ENCODE measurements at regions of chr1 and their contacts with region 1.

Region 1: DNA sequence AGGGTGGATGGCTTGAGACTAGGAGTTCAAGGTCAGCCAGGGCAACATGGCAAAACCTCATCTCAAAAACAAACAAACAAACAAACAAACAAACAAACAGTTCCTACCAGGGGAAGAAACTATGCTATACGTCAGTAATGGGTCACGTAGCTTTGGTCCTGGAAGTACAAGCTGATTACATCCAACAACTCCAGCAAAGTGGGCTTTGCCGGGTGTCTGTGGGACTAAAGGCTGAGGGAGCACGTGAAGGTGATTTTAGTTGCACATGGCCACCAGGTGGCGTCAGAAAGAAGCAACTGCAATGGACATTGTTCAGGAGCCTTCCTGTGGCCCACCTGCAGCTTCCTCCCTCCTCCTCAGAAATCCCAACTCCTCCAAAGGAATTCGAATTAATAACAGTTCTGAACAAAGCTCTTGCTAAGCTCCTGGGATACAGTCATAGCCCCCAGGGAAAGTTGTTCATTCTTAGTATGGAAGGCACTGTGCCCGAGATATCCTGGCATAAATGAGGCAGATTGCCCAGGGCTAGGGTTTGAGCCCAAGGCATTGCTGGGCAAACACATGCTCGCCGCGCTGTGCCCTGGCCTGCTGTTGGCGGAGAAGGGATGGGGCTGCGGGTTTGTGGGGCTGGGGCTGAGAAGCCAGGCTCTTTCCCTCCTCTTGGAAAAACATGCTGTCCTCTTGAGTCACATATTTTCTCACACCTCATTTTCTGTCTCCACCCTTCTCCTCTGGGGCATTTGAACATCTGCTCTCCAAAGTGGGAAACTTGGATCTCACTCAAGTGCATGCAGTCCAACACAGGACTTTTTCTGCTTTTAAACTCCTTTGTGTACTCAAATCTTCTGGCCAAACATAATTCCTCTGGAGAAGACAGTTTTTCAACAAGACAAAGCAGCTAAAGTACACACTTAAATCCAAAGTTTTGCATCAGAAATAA is 28.6 kb downstream of the AKNAD1 start:
- DNase-seq: peak; percentile 35 to 79 (median 69)
- ATAC-seq: peak; percentile 77
- H3K4me3 ChIP-seq: no peak overlapping the region
- H3K4me3 Mint-ChIP-seq: no peak overlapping the region
- H3K27ac ChIP-seq: no peak overlapping the region
- H3K27ac Mint-ChIP-seq: no peak overlapping the region
- H3K4me1 ChIP-seq: no peaks in the 10 kb centered on the region
- H3K4me1 Mint-ChIP-seq: no peaks in the 10 kb centered on the region
- H3K27me3 ChIP-seq: no peaks in the 10 kb centered on the region
- H3K27me3 Mint-ChIP-seq: no peaks in the 10 kb centered on the region
- CTCF ChIP-seq: peak; percentile 72

Region 2: GRCh38 chr1:108512239-108512981 is 315.9 kb before region 1 on chr1:
- CTCF ChIA-PET with region 1: no interaction called
- POLR2A ChIA-PET with region 1: no interaction called
- intact Hi-C with region 1: loop called in 1 of 2 experiments (anchors 2 kb)
- DNase-seq: peak in 2 of 9 experiments; percentile 65 to 75
- ATAC-seq: peak; percentile 69
- H3K4me3 ChIP-seq: no peak overlapping the region
- H3K4me3 Mint-ChIP-seq: no peak overlapping the region
- H3K27ac ChIP-seq: no peak overlapping the region
- H3K27ac Mint-ChIP-seq: no peak overlapping the region
- H3K4me1 ChIP-seq: no peaks in the 10 kb centered on the region
- H3K4me1 Mint-ChIP-seq: no peaks in the 10 kb centered on the region
- H3K27me3 ChIP-seq: no peaks in the 10 kb centered on the region
- H3K27me3 Mint-ChIP-seq: peaks cover 21% of the 10 kb centered on the region
- CTCF ChIP-seq: peak; percentile 99

Region 3: DNA sequence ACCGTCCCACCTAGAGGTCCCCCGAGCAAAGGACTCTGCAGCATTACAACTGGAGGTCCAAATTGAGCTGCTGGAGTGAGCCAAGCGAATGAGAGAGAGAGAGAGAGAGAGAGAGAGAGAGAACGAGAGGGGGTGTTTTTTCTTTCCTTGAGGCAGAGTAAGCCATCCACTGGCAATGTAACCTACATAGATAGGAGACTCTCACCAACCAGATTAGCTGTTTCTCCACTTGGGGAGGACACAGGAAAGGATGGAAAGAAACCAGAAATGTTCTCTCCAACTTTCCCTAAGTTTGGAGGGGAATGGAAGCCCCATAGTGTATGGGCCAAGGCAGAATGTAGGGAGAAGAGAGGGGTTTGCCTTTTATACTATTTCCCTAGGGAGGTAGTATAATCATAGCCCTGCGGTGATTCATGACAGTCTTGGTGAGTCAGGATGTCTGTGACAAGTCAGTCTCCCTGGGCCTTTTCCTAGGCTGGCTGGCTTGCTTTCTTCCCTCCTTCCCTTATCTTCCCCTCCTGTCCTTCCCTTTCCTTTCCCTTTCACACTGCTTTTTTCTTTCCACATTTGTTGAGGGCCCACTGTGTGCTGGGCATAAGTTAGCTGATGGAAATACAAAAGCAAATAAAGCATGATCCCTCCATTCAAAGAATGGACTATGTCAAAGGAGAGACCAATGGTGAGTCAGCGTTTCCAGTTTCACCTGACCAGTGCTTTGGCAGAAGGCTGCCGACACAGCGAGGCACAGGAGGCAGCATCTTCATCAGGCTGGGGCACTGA is 108.4 kb before region 1 on chr1:
- CTCF ChIA-PET with region 1: no interaction called
- POLR2A ChIA-PET with region 1: no interaction called
- intact Hi-C with region 1: no loop called
- DNase-seq: no peak
- ATAC-seq: no peak
- H3K4me3 ChIP-seq: no peak overlapping the region
- H3K4me3 Mint-ChIP-seq: no peak overlapping the region
- H3K27ac ChIP-seq: no peak overlapping the region
- H3K27ac Mint-ChIP-seq: no peak overlapping the region
- H3K4me1 ChIP-seq: no peaks in the 10 kb centered on the region
- H3K4me1 Mint-ChIP-seq: no peaks in the 10 kb centered on the region
- H3K27me3 ChIP-seq: no peaks in the 10 kb centered on the region
- H3K27me3 Mint-ChIP-seq: peaks cover 7% of the 10 kb centered on the region
- CTCF ChIP-seq: no peak

Region 4: GRCh38 chr1:108846001-108846400 is 17.7 kb after region 1 on chr1:
- CTCF ChIA-PET with region 1: interaction called, 33 read pairs
- POLR2A ChIA-PET with region 1: no interaction called
- intact Hi-C with region 1: no loop called
- DNase-seq: no peak
- ATAC-seq: no peak
- H3K4me3 ChIP-seq: no peak overlapping the region
- H3K4me3 Mint-ChIP-seq: no peak overlapping the region
- H3K27ac ChIP-seq: no peak overlapping the region
- H3K27ac Mint-ChIP-seq: no peak overlapping the region
- H3K4me1 ChIP-seq: no peaks in the 10 kb centered on the region
- H3K4me1 Mint-ChIP-seq: no peaks in the 10 kb centered on the region
- H3K27me3 ChIP-seq: no peaks in the 10 kb centered on the region
- H3K27me3 Mint-ChIP-seq: peaks cover 2% of the 10 kb centered on the region
- CTCF ChIP-seq: no peak

Region 5: GRCh38 chr1:108892356-108893140 is 64.3 kb after region 1 on chr1:
- CTCF ChIA-PET with region 1: interaction called, 227 read pairs
- POLR2A ChIA-PET with region 1: no interaction called
- intact Hi-C with region 1: no loop called
- DNase-seq: no peak
- ATAC-seq: no peak
- H3K4me3 ChIP-seq: no peak overlapping the region
- H3K4me3 Mint-ChIP-seq: no peak overlapping the region
- H3K27ac ChIP-seq: no peak overlapping the region
- H3K27ac Mint-ChIP-seq: no peak overlapping the region
- H3K4me1 ChIP-seq: no peaks in the 10 kb centered on the region
- H3K4me1 Mint-ChIP-seq: no peaks in the 10 kb centered on the region
- H3K27me3 ChIP-seq: no peaks in the 10 kb centered on the region
- H3K27me3 Mint-ChIP-seq: peaks cover 12% of the 10 kb centered on the region
- CTCF ChIP-seq: no peak

Region 6: GRCh38 chr1:109193653-109194590 is 365.6 kb after region 1 on chr1:
- CTCF ChIA-PET with region 1: no interaction called
- POLR2A ChIA-PET with region 1: no interaction called
- intact Hi-C with region 1: loop called in 1 of 2 experiments (anchors 10 kb)
- DNase-seq: peak; percentile 16 to 63 (median 47)
- ATAC-seq: peak; percentile 75
- H3K4me3 ChIP-seq: no peak overlapping the region
- H3K4me3 Mint-ChIP-seq: no peak overlapping the region
- H3K27ac ChIP-seq: no peak overlapping the region
- H3K27ac Mint-ChIP-seq: no peak overlapping the region
- H3K4me1 ChIP-seq: peaks cover under 1% of the 10 kb centered on the region
- H3K4me1 Mint-ChIP-seq: peaks cover 2% of the 10 kb centered on the region
- H3K27me3 ChIP-seq: no peaks in the 10 kb centered on the region
- H3K27me3 Mint-ChIP-seq: no peaks in the 10 kb centered on the region
- CTCF ChIP-seq: peak; percentile 59

Region 7: DNA sequence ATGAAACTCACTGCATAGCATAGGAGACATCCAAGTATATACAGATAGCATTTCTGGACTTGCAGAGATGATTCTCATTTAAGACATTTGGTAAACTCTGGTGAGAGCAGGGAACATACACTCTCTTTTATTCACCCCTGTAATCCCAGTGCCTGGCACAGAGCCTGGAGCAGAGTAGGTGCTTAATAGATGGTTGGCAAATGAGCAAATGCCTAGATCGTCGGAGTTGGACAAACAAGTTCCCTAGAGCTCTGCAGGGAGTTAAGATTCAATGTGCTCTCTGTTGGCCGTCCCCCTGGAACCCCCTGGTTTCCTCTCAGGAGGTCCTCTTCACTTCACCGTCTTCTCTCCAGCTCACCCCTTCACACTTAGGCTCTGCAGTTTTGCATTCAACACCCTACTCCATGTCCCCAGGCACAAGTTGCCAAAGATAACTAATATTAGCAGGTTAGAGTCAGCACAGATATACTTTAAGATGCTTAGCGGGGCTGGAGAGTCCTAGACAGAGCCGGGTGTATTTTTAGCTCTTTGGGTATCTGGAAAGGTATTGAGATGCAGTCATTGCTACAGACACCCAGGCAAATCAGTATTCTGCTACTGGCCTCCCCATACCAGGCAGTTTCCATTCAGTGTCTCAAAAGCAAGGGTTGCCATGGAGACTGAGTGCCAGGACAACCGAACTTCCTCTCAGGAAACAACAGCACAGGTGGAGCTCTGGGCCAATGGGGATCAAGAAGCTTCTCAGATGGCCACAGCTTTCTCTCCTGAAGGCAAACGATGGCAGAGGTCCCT is 1426.9 kb after region 1 on chr1:
- CTCF ChIA-PET with region 1: no interaction called
- POLR2A ChIA-PET with region 1: no interaction called
- intact Hi-C with region 1: no loop called
- DNase-seq: no peak
- ATAC-seq: no peak
- H3K4me3 ChIP-seq: no peak overlapping the region
- H3K4me3 Mint-ChIP-seq: no peak overlapping the region
- H3K27ac ChIP-seq: no peak overlapping the region
- H3K27ac Mint-ChIP-seq: no peak overlapping the region
- H3K4me1 ChIP-seq: no peaks in the 10 kb centered on the region
- H3K4me1 Mint-ChIP-seq: no peaks in the 10 kb centered on the region
- H3K27me3 ChIP-seq: no peaks in the 10 kb centered on the region
- H3K27me3 Mint-ChIP-seq: no peaks in the 10 kb centered on the region
- CTCF ChIP-seq: no peak

Measured in CD8-positive, alpha-beta T cell (primary cell).